HepG2 (cell line): ENCODE measurements at regions of chr1 and their contacts with region 1.

Region 1: DNA sequence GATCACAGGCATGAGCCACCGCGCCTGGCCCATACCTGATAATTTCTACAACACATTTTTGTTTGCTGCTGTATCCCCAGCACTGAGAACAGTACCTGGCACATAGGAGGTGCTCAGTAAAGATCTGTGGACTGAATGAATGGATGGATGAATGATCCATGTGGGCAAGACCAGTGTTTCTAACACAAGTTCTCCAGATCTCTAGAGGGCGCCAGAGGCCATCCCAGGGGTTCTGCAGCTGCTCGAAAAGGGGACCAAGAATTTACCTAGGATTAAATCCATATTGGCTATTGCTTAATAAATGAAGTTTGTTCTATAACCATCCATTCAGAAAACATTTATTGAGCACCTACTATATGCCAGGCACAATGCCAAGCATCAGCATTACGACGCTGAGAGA is 167.7 kb downstream of the ACTL8 start:
- DNase-seq: peak; percentile 41
- ATAC-seq: peak; percentile 35; the same call in 1 of the 3 replicates
- H3K4me3 ChIP-seq: no peak overlapping the region
- H3K27ac ChIP-seq: no peak overlapping the region
- H3K4me1 ChIP-seq: no peaks in the 10 kb centered on the region
- H3K27me3 ChIP-seq: 0 out of 5 replicates have a peak, but pooled peaks cover 0 to 2% of the 10 kb centered on the region in 2 experiments
- CTCF ChIP-seq: peak; percentile 68
- EP300 ChIP-seq: no peak
- POLR2A ChIP-seq: no peak
- RAD21 ChIP-seq: peak; percentile 30; the same call in 1 of the 2 replicates

Region 2: DNA sequence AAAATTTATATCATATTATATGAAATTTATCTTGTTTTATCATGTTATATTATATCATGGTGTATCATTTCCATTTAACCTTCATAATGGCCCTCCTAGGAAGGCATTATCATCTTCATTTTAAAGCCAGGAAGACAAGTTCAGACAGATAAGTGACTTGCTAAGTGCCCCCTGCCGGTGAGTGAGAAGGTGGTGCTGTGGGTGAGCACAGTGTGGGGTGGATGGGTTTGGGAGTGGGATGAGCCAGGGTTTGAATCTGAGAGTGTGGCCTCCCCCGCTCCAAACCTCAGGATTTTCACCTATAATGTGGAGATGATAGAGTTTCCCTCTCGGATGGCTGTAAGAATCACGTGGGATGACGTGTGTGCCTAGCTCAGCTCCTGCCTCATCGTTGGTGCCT is 76.1 kb after region 1 on chr1:
- CTCF ChIA-PET with region 1: no interaction called
- POLR2A ChIA-PET with region 1: no interaction called
- in situ Hi-C with region 1: loop called (anchors 5 kb)
- intact Hi-C with region 1: loop called (anchors 2 kb)
- DNase-seq: peak; percentile 32
- ATAC-seq: peak; percentile 69
- H3K4me3 ChIP-seq: no peak overlapping the region
- H3K27ac ChIP-seq: no peak overlapping the region
- H3K4me1 ChIP-seq: no peaks in the 10 kb centered on the region
- H3K27me3 ChIP-seq: peaks cover 2 to 6% of the 10 kb centered on the region in 2 experiments; a peak in 1 of 5 replicates
- CTCF ChIP-seq: peak; percentile 39
- EP300 ChIP-seq: no peak
- POLR2A ChIP-seq: no peak
- RAD21 ChIP-seq: no peak

Region 3: GRCh38 chr1:18100491-18101063 is 177.7 kb after region 1 on chr1:
- CTCF ChIA-PET with region 1: interaction called, 6 read pairs
- POLR2A ChIA-PET with region 1: no interaction called
- in situ Hi-C with region 1: loop called (anchors 5 kb)
- intact Hi-C with region 1: loop called (anchors 1 kb)
- DNase-seq: peak; percentile 38
- ATAC-seq: no peak
- H3K4me3 ChIP-seq: no peak overlapping the region
- H3K27ac ChIP-seq: no peak overlapping the region
- H3K4me1 ChIP-seq: no peaks in the 10 kb centered on the region
- H3K27me3 ChIP-seq: peaks cover 0 to 7% of the 10 kb centered on the region in 2 experiments; a peak in 1 of 5 replicates
- CTCF ChIP-seq: peak; percentile 65
- EP300 ChIP-seq: no peak
- POLR2A ChIP-seq: no peak
- RAD21 ChIP-seq: no peak; the same call in 1 of the 2 replicates

Region 4: DNA sequence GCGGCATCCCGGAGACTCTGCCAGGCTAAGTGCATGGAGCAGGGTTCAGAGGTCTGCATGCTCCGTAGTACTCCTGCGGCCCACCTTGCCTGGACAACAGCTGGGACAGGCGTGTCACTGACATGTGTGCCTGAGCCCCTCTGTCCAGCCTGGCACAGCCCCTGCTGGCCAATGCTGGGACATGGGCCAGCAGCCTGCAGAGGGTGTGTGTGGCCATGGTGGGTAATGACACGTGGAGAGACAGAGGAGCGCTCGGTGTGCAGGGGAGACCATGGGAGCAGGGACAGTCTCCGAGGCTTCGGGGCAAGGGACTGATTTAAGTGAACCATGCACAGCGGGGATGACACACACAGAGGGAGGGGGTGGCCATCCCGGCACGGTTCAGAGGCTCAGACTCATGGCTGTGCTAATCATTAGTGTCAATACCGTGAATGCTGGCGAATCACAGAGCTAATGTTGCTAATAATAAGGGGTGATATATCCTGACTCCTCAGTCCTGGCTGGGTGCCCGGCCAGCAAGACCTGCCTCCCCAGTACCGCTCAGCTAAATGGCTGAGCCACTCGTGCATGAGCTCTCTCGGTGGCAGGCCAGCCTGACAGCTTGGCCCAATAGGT is 226.3 kb after region 1 on chr1:
- CTCF ChIA-PET with region 1: no interaction called
- POLR2A ChIA-PET with region 1: no interaction called
- in situ Hi-C with region 1: no loop called
- intact Hi-C with region 1: no loop called
- DNase-seq: peak; percentile 9
- ATAC-seq: peak; percentile 98
- H3K4me3 ChIP-seq: no peak overlapping the region
- H3K27ac ChIP-seq: no peak overlapping the region
- H3K4me1 ChIP-seq: no peaks in the 10 kb centered on the region
- H3K27me3 ChIP-seq: peaks cover 3 to 45% of the 10 kb centered on the region in 2 experiments; a peak in 3 of 5 replicates
- CTCF ChIP-seq: peak; percentile 19; the same call in 1 of the 2 replicates
- EP300 ChIP-seq: no peak
- POLR2A ChIP-seq: no peak
- RAD21 ChIP-seq: no peak

Region 5: DNA sequence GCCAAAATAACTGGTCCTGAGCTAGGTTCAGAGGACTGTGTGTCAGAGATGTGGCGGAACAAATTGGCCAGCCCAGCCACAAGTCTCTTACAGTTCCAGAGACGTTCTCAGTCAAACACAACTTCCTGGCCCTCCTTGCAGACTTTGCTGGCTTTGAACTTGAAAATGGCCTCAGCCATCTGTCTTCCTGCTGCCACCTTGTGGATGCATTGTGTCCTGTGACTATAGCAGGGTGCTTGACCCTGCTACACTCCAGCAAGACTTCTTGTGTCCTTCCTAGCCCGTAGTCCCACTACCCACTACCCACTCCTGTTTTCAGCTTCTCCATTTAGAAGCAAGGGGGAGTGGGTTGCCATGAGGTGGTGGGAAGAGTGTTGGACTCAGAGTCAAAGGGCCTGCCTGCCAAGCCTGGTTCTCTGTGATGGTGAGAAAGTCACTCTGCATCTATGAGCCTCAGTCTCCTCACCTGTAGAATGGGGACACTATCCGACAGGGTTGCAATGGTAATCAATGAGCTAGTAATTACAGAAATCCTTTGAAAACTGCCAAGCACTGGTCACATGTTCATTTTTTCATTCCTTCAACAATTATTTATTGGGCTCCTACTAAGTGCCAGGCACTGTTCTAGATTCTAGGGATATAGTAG is 294.7 kb after region 1 on chr1:
- CTCF ChIA-PET with region 1: interaction called, 8 read pairs
- POLR2A ChIA-PET with region 1: no interaction called
- in situ Hi-C with region 1: no loop called
- intact Hi-C with region 1: loop called (anchors 5 kb)
- DNase-seq: peak; percentile 33
- ATAC-seq: peak; percentile 38; the same call in 1 of the 3 replicates
- H3K4me3 ChIP-seq: no peak overlapping the region
- H3K27ac ChIP-seq: no peak overlapping the region
- H3K4me1 ChIP-seq: no peaks in the 10 kb centered on the region
- H3K27me3 ChIP-seq: peaks cover 0 to 13% of the 10 kb centered on the region in 2 experiments; a peak in 1 of 5 replicates
- CTCF ChIP-seq: peak; percentile 60
- EP300 ChIP-seq: no peak
- POLR2A ChIP-seq: no peak
- RAD21 ChIP-seq: 0 out of 2 replicates have a peak, but pooled peaks have one; percentile 29